Activated T-helper 2 cell treated with anti-CD3 and anti-CD28 coated beads, Interferon-gamma antibody, Interleukin-2, Interleukin-4, amounts not matched to agents 10 μg/mL and 5 μg/mL and 100 μg/mL, durations not matched to agents 14 hours and 24 hours and 36 hours (primary cell): ENCODE measurements at regions of chr1 and their contacts with region 1.

Region 1: GRCh38 chr1:111481387-111482221 is 7.8 kb downstream of the C1orf162 start:
- DNase-seq: peak; percentile 42
- H3K4me3 Mint-ChIP-seq: no peak overlapping the region
- H3K27ac Mint-ChIP-seq: no peak overlapping the region
- H3K4me1 Mint-ChIP-seq: peaks cover 27% of the 10 kb centered on the region
- H3K27me3 Mint-ChIP-seq: peaks cover 9% of the 10 kb centered on the region

Region 2: DNA sequence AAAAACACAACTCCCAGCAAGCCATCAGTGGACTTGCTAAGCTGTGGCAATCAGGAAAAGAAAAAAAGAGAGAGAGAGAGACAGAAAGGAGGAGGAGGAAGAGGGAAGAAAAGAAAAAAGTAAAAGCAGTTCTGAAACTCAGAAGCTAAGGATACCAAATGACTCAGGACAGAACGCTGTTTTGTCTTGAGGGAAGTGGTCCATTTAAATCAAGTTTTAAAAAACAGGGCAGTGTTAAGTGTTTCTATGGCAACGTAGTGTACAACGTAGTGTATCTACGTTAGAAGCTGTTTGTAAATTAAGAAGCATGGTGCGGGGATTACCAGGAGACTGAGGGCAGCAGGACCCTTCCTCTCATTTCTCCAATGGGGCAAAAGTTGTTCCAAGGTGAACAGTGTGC is 16.0 kb after region 1 on chr1:
- intact Hi-C with region 1: loop called (anchors 2 kb)
- DNase-seq: no peak
- H3K4me3 Mint-ChIP-seq: no peak overlapping the region
- H3K27ac Mint-ChIP-seq: no peak overlapping the region
- H3K4me1 Mint-ChIP-seq: peaks cover 32% of the 10 kb centered on the region
- H3K27me3 Mint-ChIP-seq: no peaks in the 10 kb centered on the region

Region 3: GRCh38 chr1:111516005-111516535 is 34.5 kb after region 1 on chr1:
- intact Hi-C with region 1: loop called (anchors 2 kb)
- DNase-seq: no peak
- H3K4me3 Mint-ChIP-seq: peak overlapping the region; percentile 3
- H3K27ac Mint-ChIP-seq: peak overlapping the region; percentile 59
- H3K4me1 Mint-ChIP-seq: peaks cover 44% of the 10 kb centered on the region
- H3K27me3 Mint-ChIP-seq: no peaks in the 10 kb centered on the region

Region 4: GRCh38 chr1:111747282-111747734 is 265.7 kb after region 1 on chr1:
- intact Hi-C with region 1: loop called (anchors 1 kb)
- DNase-seq: peak; percentile 66
- H3K4me3 Mint-ChIP-seq: no peak overlapping the region
- H3K27ac Mint-ChIP-seq: no peak overlapping the region
- H3K4me1 Mint-ChIP-seq: peaks cover 16% of the 10 kb centered on the region
- H3K27me3 Mint-ChIP-seq: peaks cover 13% of the 10 kb centered on the region